Calu3 (cell line): ENCODE measurements at regions of chr5 and their contacts with region 1.

Region 1: GRCh38 chr5:116492016-116492623 is 82.5 kb downstream of the SEMA6A start:
- DNase-seq: peak; percentile 69
- H3K4me3 Mint-ChIP-seq: no peak overlapping the region
- H3K27ac Mint-ChIP-seq: peak overlapping the region; percentile 58
- H3K4me1 Mint-ChIP-seq: peaks cover 32% of the 10 kb centered on the region
- H3K27me3 Mint-ChIP-seq: no peaks in the 10 kb centered on the region
- CTCF ChIP-seq: no peak

Region 2: GRCh38 chr5:116144103-116144502 is 348.0 kb before region 1 on chr5:
- CTCF ChIA-PET with region 1: no interaction called
- intact Hi-C with region 1: loop called (anchors 1 kb)
- DNase-seq: no peak
- H3K4me3 Mint-ChIP-seq: no peak overlapping the region
- H3K27ac Mint-ChIP-seq: no peak overlapping the region
- H3K4me1 Mint-ChIP-seq: no peaks in the 10 kb centered on the region
- H3K27me3 Mint-ChIP-seq: no peaks in the 10 kb centered on the region
- CTCF ChIP-seq: no peak

Region 3: DNA sequence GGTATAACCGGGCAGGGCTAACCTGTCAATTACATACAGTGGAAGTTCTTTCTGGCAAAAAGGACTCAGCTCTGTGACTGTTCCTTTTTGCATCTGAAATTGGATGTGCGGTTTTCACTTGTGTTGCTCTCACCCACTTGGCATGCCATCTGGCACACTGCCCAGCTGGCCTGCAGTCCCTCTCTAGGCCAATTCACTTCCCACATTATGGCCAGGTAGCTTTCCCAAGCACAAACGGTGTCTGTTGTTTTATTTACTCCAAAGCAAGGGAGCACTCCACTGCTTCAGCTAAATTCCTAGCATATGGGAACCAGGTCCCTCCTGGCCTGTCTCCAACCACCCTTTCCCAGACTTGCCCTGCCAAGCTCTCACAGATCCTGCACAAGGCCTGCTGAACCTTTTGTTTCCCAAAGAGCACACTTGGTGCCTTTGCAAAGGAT is 50.0 kb before region 1 on chr5:
- CTCF ChIA-PET with region 1: no interaction called
- intact Hi-C with region 1: loop called (anchors 2 kb)
- DNase-seq: peak; percentile 87
- H3K4me3 Mint-ChIP-seq: no peak overlapping the region
- H3K27ac Mint-ChIP-seq: peak overlapping the region; percentile 24
- H3K4me1 Mint-ChIP-seq: peaks cover 47% of the 10 kb centered on the region
- H3K27me3 Mint-ChIP-seq: no peaks in the 10 kb centered on the region
- CTCF ChIP-seq: no peak

Region 4: GRCh38 chr5:116459306-116459705 is 32.8 kb before region 1 on chr5:
- CTCF ChIA-PET with region 1: no interaction called
- intact Hi-C with region 1: no loop called
- DNase-seq: no peak
- H3K4me3 Mint-ChIP-seq: no peak overlapping the region
- H3K27ac Mint-ChIP-seq: no peak overlapping the region
- H3K4me1 Mint-ChIP-seq: peaks cover 7% of the 10 kb centered on the region
- H3K27me3 Mint-ChIP-seq: no peaks in the 10 kb centered on the region
- CTCF ChIP-seq: no peak

Region 5: DNA sequence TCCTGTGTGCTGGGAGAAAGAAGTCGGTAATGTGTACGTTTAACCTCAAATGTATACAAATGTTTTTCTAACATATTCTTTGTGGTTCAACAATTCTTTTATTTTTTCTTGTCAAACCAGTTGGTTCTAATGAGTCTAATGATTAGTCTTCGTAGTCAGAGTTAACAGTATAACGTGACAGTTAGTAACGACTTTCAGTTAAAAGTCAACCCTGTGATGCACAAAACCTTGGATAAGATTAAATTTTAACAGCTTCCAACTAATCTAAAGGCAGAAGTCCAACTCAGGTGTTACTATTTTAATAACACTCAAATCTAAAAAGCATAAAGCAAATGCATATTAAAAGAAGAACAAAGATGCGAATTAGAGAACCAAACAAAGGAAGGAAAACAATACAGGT is 35.5 kb after region 1 on chr5:
- CTCF ChIA-PET with region 1: no interaction called
- intact Hi-C with region 1: loop called (anchors 2 kb)
- DNase-seq: no peak
- H3K4me3 Mint-ChIP-seq: peak overlapping the region; percentile 61
- H3K27ac Mint-ChIP-seq: peak overlapping the region; percentile 60
- H3K4me1 Mint-ChIP-seq: peaks cover 45% of the 10 kb centered on the region
- H3K27me3 Mint-ChIP-seq: no peaks in the 10 kb centered on the region
- CTCF ChIP-seq: no peak